MCF 10A (cell line): ENCODE measurements at regions of chr12 and their contacts with region 1.

Region 1: GRCh38 chr12:51424662-51425438 is at the start of gene SLC4A8:
- DNase-seq: peak; percentile 58
- H3K4me3 Mint-ChIP-seq: peak within 1 kb of the TSS; percentile 68
- H3K27ac Mint-ChIP-seq: no peak within 1 kb of the TSS
- H3K4me1 Mint-ChIP-seq: no peaks in the 10 kb centered on the region
- H3K27me3 Mint-ChIP-seq: peaks cover 14% of the 10 kb centered on the region
- CTCF ChIP-seq: peak; percentile 88
- total RNA-seq, gene SLC4A8: 0.56 and 1.1 TPM in 2 replicates

Region 2: GRCh38 chr12:51246254-51246853 is 178.5 kb before region 1 on chr12:
- CTCF ChIA-PET with region 1: no interaction called
- POLR2A ChIA-PET with region 1: no interaction called
- intact Hi-C with region 1: no loop called
- DNase-seq: no peak
- H3K4me3 Mint-ChIP-seq: no peak overlapping the region
- H3K27ac Mint-ChIP-seq: peak overlapping the region; percentile 84
- H3K4me1 Mint-ChIP-seq: peaks cover 15% of the 10 kb centered on the region
- H3K27me3 Mint-ChIP-seq: no peaks in the 10 kb centered on the region
- CTCF ChIP-seq: no peak

Region 3: DNA sequence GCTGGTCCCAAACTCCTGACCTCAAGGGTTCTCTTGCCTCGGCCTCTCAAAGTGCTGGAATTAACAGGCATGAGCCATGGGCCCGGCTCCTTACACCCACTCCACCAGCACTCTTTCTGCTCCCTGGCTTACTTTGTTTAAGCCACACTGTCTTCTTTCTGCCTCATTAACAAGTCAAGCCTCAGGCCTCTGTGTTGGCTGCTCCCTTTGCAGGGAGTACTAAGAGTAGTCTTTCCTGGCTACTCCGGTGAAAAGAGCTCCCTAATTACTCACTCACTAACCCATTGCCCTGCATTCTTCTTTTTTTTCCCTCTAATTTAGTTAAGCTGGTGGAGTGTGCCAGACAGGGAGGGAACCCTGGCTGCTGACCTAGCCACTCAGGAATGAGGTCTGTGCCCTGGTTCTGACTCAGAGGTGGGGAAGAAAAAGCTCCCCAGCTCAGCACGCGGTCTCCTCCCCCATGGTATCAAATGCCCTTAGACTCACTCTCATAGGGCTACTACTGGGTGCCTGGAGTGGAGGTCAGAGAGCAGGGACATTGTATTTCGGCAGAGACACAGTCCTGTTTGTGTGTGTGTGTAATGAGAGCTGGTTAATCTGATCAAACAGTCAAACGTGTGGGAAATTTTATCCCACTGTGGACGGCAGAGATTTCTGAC is 53.4 kb before region 1 on chr12:
- CTCF ChIA-PET with region 1: interaction called, 16 read pairs
- POLR2A ChIA-PET with region 1: interaction called, 5 read pairs
- intact Hi-C with region 1: loop called (anchors 2 kb)
- DNase-seq: peak; percentile 96
- H3K4me3 Mint-ChIP-seq: peak overlapping the region; percentile 10
- H3K27ac Mint-ChIP-seq: peak overlapping the region; percentile 80
- H3K4me1 Mint-ChIP-seq: peaks cover 21% of the 10 kb centered on the region
- H3K27me3 Mint-ChIP-seq: no peaks in the 10 kb centered on the region
- CTCF ChIP-seq: no peak

Region 4: DNA sequence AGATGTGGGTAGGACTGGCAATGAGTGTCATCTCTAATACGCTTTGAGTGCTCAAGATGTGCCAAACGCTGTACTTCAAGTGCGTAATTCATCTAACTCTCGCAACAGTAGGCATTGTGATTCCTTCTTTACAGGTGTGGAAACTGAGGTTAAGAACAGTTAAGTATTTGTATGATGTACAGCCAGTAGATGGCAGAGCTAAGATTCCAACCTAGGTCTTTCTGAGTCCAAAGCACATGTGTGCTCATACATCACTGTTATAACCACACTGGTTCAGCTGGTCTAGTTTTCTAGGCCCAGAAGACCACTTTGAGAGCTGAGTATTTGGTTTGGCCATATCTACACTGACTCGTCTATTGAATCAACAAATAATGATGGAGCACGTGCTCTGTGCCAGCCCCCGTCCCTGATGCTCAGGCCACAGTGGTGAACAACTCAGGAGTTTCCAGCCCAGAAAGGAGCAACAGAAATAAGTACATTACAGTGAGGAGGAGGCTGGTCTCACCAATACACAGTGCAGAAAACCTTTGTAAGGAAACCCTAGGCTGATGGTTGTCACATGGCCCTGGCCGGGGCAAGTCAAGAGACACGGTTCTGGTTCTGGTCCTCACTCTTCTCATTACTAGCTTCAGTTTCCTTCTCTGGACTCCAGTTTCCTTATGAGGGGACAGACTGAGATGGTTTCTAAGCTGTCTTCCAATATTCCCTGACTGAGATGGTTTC is 96.9 kb after region 1 on chr12:
- CTCF ChIA-PET with region 1: interaction called, 10 read pairs
- POLR2A ChIA-PET with region 1: no interaction called
- intact Hi-C with region 1: no loop called
- DNase-seq: no peak
- H3K4me3 Mint-ChIP-seq: no peak overlapping the region
- H3K27ac Mint-ChIP-seq: no peak overlapping the region
- H3K4me1 Mint-ChIP-seq: peaks cover 5% of the 10 kb centered on the region
- H3K27me3 Mint-ChIP-seq: no peaks in the 10 kb centered on the region
- CTCF ChIP-seq: no peak

Region 5: DNA sequence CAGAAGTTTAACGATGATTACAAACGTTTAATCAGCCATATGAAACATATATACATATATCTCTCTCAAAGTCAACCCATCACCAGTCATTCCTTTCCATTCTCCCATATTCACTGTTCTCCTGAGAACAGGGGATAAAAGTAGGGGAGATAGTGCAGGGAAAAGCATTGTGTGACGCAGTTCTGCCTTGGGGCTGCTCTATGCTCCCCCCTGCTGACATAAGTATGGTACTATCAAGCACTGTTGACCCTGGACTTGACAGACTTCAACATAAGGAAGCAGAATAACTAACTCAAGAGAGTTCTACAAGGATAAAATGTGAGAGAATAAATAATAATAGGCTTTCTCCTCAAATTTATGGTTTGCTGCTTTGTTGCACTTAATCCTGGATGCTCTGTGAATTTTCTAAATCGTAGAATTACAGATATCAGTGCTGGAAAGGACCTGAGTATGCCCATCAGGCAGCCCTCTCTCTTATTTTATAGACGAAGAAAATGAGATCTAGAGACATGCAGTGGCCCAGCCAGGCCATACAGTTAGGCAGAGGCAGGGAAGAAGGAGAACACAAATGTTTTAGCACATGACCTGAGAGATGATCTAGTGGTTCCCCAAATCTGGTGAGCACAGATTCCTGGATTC is 253.4 kb after region 1 on chr12:
- CTCF ChIA-PET with region 1: interaction called, 6 read pairs
- POLR2A ChIA-PET with region 1: no interaction called
- intact Hi-C with region 1: loop called (anchors 1 kb)
- DNase-seq: peak; percentile 63
- H3K4me3 Mint-ChIP-seq: no peak overlapping the region
- H3K27ac Mint-ChIP-seq: no peak overlapping the region
- H3K4me1 Mint-ChIP-seq: peaks cover under 1% of the 10 kb centered on the region
- H3K27me3 Mint-ChIP-seq: peaks cover 42% of the 10 kb centered on the region
- CTCF ChIP-seq: peak; percentile 76

Region 6: DNA sequence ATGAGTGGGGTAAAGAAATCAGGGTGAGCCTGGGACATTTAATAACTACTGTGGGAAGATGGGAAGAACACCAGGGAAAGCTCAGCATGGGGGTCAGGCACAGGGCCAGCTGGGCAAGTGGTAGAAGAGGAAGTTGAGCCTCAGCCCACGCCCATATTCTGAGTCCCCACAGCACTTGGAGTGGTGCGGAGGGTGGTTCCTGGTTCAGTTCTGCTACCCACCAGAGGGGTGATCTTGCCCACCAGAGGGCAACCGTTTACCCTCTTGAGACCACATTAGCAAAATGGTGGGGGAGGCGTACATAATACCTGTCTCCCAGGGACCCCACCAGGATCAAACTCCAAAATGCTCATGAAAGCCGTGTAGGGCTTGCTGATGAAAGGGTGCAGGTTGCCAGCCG is 446.3 kb after region 1 on chr12:
- CTCF ChIA-PET with region 1: interaction called, 47 read pairs
- POLR2A ChIA-PET with region 1: no interaction called
- intact Hi-C with region 1: loop called (anchors 1 kb)
- DNase-seq: no peak
- H3K4me3 Mint-ChIP-seq: no peak overlapping the region
- H3K27ac Mint-ChIP-seq: no peak overlapping the region
- H3K4me1 Mint-ChIP-seq: no peaks in the 10 kb centered on the region
- H3K27me3 Mint-ChIP-seq: no peaks in the 10 kb centered on the region
- CTCF ChIP-seq: no peak